Sigmoid colon (tissue), 7 donors: ENCODE measurements at regions of chr7 and their contacts with region 1.

Region 1: GRCh38 chr7:134986363-134987251 is at the start of gene AGBL3:
- DNase-seq: peak; percentile 99
- H3K4me3 ChIP-seq: peak within 1 kb of the TSS; percentile 63 to 83 (median 73)
- H3K27ac ChIP-seq: peak within 1 kb of the TSS; percentile 89 to 93 (median 92)
- H3K4me1 ChIP-seq: peaks cover 0 to 18% (median 11%) of the 10 kb centered on the region in 4 donors
- H3K27me3 ChIP-seq: no peaks in the 10 kb centered on the region
- CTCF ChIP-seq: peak; percentile 55 to 75 (median 64)
- EP300 ChIP-seq: peak in 1 of 4 donors; percentile 50
- POLR2A ChIP-seq: peak in 1 of 2 donors; percentile 39
- total RNA-seq, gene AGBL3: 0.95 to 3.1 (median 1.1) TPM

Region 2: GRCh38 chr7:134834689-134835462 is 151.7 kb before region 1 on chr7:
- intact Hi-C with region 1: no loop called
- DNase-seq: peak; percentile 81
- H3K4me3 ChIP-seq: no peak overlapping the region
- H3K27ac ChIP-seq: peak overlapping the region; percentile 80 to 94 (median 83)
- H3K4me1 ChIP-seq: peaks cover 0 to 96% (median 77%) of the 10 kb centered on the region in 4 donors
- H3K27me3 ChIP-seq: no peaks in the 10 kb centered on the region
- CTCF ChIP-seq: no peak
- EP300 ChIP-seq: no peak
- POLR2A ChIP-seq: no peak

Region 3: DNA sequence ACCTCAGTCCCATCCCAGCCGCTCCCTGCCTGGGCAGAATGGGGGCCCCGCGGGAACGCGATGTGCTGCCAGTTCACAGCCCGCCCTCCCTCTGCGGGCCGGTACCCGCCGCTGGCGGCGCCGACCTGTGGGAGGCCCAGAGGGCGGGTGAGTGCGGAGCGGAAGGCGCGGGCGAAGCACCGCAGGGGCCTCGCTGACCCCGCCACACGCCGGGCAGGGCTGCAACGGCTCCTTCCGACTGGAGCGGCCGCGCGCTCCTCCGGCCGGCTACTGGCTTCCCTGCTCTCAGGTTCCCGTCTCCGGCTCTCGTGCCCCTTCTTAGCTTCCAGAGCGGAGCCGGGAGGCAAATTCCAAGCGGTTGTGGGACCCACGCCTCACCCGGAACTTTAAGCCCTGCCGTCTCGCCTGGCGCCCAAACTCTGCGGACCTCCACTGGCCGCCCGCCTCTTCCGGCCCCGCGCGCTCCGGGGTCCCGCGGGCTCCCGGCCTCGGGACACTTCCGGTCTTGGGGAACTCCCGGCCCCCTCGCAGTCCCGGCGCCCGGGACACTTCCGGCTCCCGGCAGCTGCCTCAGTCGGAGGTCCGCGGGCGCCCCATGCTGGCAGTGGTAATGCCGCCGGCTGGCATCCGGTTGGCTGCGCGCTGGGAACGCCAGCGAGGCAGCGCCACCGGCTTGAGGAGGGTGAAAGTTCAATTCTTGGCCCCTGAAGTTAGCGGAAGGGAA is 183.8 kb after region 1 on chr7 and contains the start of gene CYREN:
- intact Hi-C with region 1: loop called (anchors 1 kb)
- DNase-seq: peak; percentile 97
- H3K4me3 ChIP-seq: peak within 1 kb of the TSS; percentile 61 to 92 (median 74)
- H3K27ac ChIP-seq: peak within 1 kb of the TSS; percentile 94 to 99 (median 96)
- H3K4me1 ChIP-seq: peaks cover 0 to 46% (median 38%) of the 10 kb centered on the region in 4 donors
- H3K27me3 ChIP-seq: no peaks in the 10 kb centered on the region
- CTCF ChIP-seq: peak; percentile 35 to 62 (median 44)
- EP300 ChIP-seq: no peak
- POLR2A ChIP-seq: peak in 1 of 2 donors; percentile 49
- total RNA-seq, gene CYREN: 27.5 to 31.9 (median 29.2) TPM